ENCODE measurements at regions of chr18 and their contacts with region 1.

Region 1: GRCh38 chr18:24051031-24051947 is 36.7 kb downstream of the TTC39C start:
- DNase-seq: no peak
- H3K4me3 Mint-ChIP-seq: peak overlapping the region; percentile 33
- H3K27ac Mint-ChIP-seq: peak overlapping the region; percentile 80
- H3K4me1 Mint-ChIP-seq: peaks cover 62% of the 10 kb centered on the region
- H3K27me3 Mint-ChIP-seq: no peaks in the 10 kb centered on the region

Region 2: DNA sequence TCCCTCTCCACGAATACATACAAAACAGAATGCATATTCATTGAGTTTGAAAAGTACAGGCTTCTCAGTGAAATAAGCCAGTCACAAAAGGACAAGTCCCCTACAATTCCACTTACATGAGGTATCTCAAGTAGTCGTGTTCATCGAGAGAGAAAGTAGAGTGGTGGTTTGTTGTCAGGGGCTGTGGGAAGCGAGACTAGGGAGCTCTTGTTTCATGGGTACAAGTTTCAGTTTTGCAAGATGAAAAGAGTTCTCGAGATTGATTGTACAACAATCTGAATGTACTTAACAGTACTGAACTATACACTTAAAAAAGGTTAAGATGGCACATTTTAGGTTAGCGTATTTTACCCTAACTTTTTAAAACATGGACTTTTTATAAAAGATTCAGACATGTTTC is 108.2 kb before region 1 on chr18:
- intact Hi-C with region 1: loop called (anchors 1 kb)
- DNase-seq: peak; percentile 39
- H3K4me3 Mint-ChIP-seq: peak overlapping the region; percentile 47
- H3K27ac Mint-ChIP-seq: peak overlapping the region; percentile 1
- H3K4me1 Mint-ChIP-seq: peaks cover 40% of the 10 kb centered on the region
- H3K27me3 Mint-ChIP-seq: peaks cover 48% of the 10 kb centered on the region

Region 3: DNA sequence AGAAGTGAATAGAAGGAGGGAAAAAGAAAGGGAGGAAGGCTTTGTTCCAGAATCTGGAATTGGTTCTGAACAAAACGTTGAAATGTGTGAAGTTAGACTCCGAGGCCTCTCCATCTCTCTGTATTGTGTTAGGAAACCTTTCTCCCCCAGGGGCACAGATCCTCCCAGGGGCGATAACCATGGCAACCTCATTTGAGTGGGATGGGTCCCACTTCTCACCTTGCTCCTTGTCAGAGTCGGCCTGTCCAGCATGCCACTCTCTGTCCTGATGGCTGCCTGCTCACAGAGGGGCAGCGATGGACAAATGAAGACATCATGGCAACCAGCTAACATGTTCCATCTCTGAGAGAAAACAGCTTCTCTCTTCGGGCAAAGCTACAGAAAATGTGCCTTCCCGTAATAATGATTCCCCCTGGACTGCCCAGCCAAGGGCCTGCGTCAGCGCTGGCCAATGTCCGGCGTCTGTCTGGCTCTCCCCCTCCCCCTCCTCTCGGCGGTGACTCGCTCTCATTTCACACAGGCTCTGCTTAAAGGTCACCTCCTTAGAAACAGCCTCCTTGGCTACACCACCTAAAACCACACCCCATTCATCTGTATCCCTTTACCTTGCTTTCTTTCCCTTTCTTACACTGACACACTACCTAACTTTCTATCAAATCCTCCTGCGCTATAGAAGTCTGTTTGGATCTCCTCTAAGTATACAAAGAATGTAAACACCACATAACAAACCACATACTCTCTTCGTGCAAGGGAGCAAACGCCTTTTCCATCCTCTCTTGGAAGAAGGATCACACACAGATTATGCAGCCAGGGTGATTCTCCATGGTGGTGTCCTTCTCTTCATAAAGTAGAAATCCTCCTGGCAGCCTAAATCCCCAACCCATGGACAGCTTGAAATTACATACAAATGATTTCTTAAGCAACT is 68.9 kb before region 1 on chr18:
- intact Hi-C with region 1: no loop called
- DNase-seq: no peak
- H3K4me3 Mint-ChIP-seq: no peak overlapping the region
- H3K27ac Mint-ChIP-seq: no peak overlapping the region
- H3K4me1 Mint-ChIP-seq: peaks cover 19% of the 10 kb centered on the region
- H3K27me3 Mint-ChIP-seq: peaks cover 26% of the 10 kb centered on the region

Region 4: GRCh38 chr18:24019641-24020331 is 31.5 kb before region 1 on chr18:
- intact Hi-C with region 1: loop called (anchors 1 kb)
- DNase-seq: peak; percentile 64
- H3K4me3 Mint-ChIP-seq: peak overlapping the region; percentile 67
- H3K27ac Mint-ChIP-seq: peak overlapping the region; percentile 90
- H3K4me1 Mint-ChIP-seq: peaks cover 78% of the 10 kb centered on the region
- H3K27me3 Mint-ChIP-seq: no peaks in the 10 kb centered on the region

Region 5: GRCh38 chr18:24063121-24063731 is 11.9 kb after region 1 on chr18:
- intact Hi-C with region 1: no loop called
- DNase-seq: no peak
- H3K4me3 Mint-ChIP-seq: no peak overlapping the region
- H3K27ac Mint-ChIP-seq: no peak overlapping the region
- H3K4me1 Mint-ChIP-seq: peaks cover 24% of the 10 kb centered on the region
- H3K27me3 Mint-ChIP-seq: peaks cover 2% of the 10 kb centered on the region

Region 6: DNA sequence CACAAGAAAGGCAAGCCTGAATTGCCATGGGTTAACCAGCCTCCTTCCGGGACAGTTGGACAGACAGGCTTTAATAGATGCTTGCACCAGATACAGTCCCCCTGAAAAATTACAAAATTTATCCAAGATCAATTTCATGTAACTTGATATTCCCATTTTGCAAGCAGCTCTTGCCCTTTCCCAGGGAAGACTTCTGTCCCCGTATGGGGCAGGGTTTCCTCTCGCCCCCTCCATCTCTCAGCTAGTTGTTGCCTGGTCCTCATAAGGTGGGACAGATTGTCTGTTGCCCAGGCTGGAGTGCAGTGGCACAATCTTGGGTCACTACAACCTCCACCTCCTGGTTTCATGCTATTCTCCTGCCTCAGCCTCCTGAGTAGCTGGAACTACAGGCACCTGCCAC is 24.4 kb after region 1 on chr18:
- intact Hi-C with region 1: loop called (anchors 1 kb)
- DNase-seq: no peak
- H3K4me3 Mint-ChIP-seq: no peak overlapping the region
- H3K27ac Mint-ChIP-seq: peak overlapping the region; percentile 77
- H3K4me1 Mint-ChIP-seq: peaks cover 32% of the 10 kb centered on the region
- H3K27me3 Mint-ChIP-seq: no peaks in the 10 kb centered on the region

Measured in activated T-helper 2 cell treated with anti-CD3 and anti-CD28 coated beads, Interferon-gamma antibody, Interleukin-2, Interleukin-4, amounts not matched to agents 10 μg/mL and 5 μg/mL and 100 μg/mL, durations not matched to agents 14 hours and 24 hours and 36 hours (primary cell).